HEK293T (cell line): ENCODE measurements at regions of chr4 and their contacts with region 1.

Region 1: DNA sequence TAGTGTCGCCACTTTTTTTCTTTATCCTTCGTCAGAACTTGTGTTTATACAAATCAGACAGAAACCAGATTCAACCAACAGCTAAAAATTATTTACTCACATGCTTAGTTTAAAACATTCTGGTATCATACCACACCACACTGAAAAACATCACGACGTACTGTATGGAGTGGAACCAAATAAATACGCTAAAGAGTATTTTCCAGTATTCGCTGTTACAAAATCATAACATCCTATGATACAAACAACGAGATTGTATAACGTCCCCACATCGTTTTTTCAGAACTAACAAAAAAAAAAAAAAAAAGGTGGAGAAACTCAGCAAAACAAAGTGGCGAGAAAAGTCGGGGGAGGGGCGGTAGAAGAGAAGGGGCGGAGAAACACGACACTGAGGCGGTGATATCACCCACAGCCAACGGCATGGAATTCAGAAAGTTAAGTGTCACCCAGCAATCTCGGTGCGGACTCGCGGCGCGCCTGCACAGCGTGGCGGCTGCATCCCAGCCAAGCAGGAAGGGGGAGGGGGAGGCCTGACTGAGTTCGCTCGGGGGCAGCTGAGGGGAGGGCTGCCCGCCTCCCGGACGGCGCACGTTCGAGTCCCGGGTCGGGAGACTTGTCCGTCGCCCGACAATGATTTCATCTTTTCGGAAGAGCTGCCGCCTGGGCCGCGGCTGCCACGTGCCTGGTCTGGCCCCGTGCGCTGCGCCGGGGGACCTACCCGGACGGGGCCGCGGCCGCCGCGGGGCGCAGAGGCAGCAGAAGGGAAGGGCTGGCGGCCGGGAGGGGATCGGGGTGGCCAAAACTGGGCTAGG is 920 bp downstream of the SETD7 start:
- DNase-seq: peak; percentile 83

Region 2: GRCh38 chr4:138775890-138776289 is 779.2 kb before region 1 on chr4:
- CTCF ChIA-PET with region 1: no interaction called
- POLR2A ChIA-PET with region 1: no interaction called
- DNase-seq: no peak

Region 3: DNA sequence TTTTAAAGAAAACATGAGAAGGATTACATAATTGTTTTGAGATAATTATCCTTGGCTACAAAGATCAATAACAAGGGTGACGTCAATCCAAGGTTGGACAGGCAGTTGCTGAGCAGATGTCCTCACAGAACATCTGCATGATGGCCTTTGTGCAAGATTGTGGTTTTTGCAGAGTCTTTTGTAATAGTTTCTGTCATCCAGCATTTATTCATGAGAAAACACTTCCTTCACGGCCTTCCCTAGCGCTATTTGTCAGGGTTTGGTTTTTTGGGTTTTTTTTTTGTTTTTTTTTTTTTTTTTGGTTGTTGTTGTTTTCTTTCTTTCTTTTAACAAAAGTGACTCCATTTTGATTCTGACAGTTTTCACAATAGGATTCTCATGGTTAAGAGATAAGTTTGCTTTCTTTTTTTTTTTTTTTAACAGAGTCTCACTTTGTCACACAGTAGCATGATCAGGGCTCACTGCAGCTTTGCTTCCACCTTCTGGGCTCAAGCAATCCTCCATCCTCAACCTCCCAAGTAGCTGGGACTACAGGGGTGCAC is 346.6 kb before region 1 on chr4:
- CTCF ChIA-PET with region 1: no interaction called
- POLR2A ChIA-PET with region 1: no interaction called
- DNase-seq: no peak

Region 4: GRCh38 chr4:139453371-139454110 is 101.6 kb before region 1 on chr4:
- CTCF ChIA-PET with region 1: no interaction called
- POLR2A ChIA-PET with region 1: interaction called, 27 read pairs
- DNase-seq: peak; percentile 90

Region 5: DNA sequence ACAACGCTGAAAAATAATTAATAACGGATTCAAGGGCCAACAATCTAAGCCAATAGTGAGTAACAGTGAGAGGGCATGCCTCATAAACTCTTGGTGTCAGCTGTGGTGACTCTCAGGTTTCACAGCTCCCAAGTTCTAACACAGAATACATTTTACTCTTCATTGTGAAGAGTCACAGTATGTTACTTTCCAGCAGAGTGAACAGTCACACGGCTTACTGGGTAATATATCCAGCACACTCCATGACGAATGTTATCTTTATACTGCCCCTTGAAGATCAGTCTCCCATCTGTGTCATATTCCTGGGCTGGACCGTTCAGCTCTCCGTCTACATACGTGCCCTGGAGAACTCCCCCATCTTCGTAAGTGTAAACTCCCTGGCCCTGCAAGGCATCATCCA is 22.2 kb before region 1 on chr4:
- CTCF ChIA-PET with region 1: interaction called, 6 read pairs
- POLR2A ChIA-PET with region 1: interaction called, 10 read pairs
- DNase-seq: peak; percentile 36

Region 6: DNA sequence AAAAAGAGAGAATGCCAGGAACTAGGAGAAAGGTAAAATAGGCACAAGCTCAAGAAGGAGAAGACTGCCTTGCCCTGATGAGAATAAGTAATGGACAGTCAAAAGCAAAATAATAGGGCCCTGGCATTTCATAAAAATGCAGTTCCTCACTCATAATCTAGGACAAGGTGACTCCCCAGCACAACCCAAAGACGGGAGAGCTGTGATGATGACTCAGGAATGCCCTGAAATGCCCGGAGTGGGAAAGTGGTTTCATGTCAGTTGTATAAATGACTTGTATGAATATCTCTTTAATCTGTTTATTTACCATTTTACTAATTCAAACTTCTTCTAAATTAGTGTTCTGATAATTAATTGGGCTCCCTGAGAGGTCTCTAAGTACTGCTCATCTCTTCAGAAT is 29.7 kb after region 1 on chr4:
- CTCF ChIA-PET with region 1: interaction called, 3 read pairs
- POLR2A ChIA-PET with region 1: interaction called, 10 read pairs
- DNase-seq: no peak

Region 7: DNA sequence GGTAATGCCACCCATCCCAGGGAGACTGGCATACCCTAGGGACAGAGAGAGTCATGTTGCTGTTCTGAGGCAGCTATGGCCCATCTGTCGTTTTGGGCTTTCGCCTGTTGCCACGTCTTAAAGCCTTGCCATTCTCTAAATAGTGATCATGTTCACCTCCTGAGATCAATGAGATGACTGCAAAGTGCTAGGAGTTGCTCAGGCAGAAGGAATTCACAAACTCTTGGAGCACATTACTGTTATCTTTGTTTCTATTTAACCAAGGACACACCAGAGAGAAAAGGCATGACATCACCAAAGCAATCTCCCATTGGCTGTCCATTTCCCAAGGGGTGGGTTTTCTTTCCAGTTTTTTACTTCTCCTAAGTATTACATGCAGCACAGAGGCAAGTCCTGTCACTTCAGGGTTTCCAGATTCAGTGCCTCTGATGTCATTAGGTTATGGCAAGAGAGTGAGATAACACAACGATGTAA is 38.0 kb after region 1 on chr4:
- CTCF ChIA-PET with region 1: no interaction called
- POLR2A ChIA-PET with region 1: interaction called, 18 read pairs
- DNase-seq: peak; percentile 60